CD4-positive, alpha-beta T cell (primary cell): ENCODE measurements at regions of chr10 and their contacts with region 1.

Region 1: GRCh38 chr10:69408318-69409175 is 8.2 kb downstream of the TACR2 start:
- DNase-seq: peak; percentile 79 to 97 (median 87)
- ATAC-seq: peak; percentile 92
- H3K4me3 ChIP-seq: peak overlapping the region; percentile 32
- H3K4me3 Mint-ChIP-seq: peak overlapping the region; percentile 64
- H3K27ac ChIP-seq: peak overlapping the region; percentile 72 to 82
- H3K27ac Mint-ChIP-seq: peak overlapping the region; percentile 88
- H3K4me1 ChIP-seq: peaks cover 26% of the 10 kb centered on the region
- H3K4me1 Mint-ChIP-seq: peaks cover 28% of the 10 kb centered on the region
- H3K27me3 ChIP-seq: no peaks in the 10 kb centered on the region
- H3K27me3 Mint-ChIP-seq: no peaks in the 10 kb centered on the region
- CTCF ChIP-seq: peak; percentile 73

Region 2: GRCh38 chr10:69318106-69318866 is 90.3 kb before region 1 on chr10:
- CTCF ChIA-PET with region 1: interaction called, 5 read pairs
- POLR2A ChIA-PET with region 1: interaction called, 5 read pairs
- intact Hi-C with region 1: loop called in 1 of 2 experiments (anchors 5 kb)
- DNase-seq: peak; percentile 83 to 96 (median 90)
- ATAC-seq: peak; percentile 90
- H3K4me3 ChIP-seq: peak overlapping the region; percentile 80
- H3K4me3 Mint-ChIP-seq: peak overlapping the region; percentile 98
- H3K27ac ChIP-seq: peak overlapping the region; percentile 86 to 93
- H3K27ac Mint-ChIP-seq: peak overlapping the region; percentile 95
- H3K4me1 ChIP-seq: peaks cover 45% of the 10 kb centered on the region
- H3K4me1 Mint-ChIP-seq: peaks cover 42% of the 10 kb centered on the region
- H3K27me3 ChIP-seq: no peaks in the 10 kb centered on the region
- H3K27me3 Mint-ChIP-seq: no peaks in the 10 kb centered on the region
- CTCF ChIP-seq: no peak

Region 3: GRCh38 chr10:69425511-69426298 is 17.2 kb after region 1 on chr10:
- CTCF ChIA-PET with region 1: interaction called, 7 read pairs
- POLR2A ChIA-PET with region 1: interaction called, 15 read pairs
- intact Hi-C with region 1: loop called (anchors 2 kb)
- DNase-seq: peak in 12 of 14 experiments; percentile 16 to 89 (median 40)
- ATAC-seq: peak; percentile 92
- H3K4me3 ChIP-seq: no peak overlapping the region
- H3K4me3 Mint-ChIP-seq: peak overlapping the region; percentile 16
- H3K27ac ChIP-seq: peak overlapping the region; percentile 74 to 88
- H3K27ac Mint-ChIP-seq: peak overlapping the region; percentile 82
- H3K4me1 ChIP-seq: peaks cover 67% of the 10 kb centered on the region
- H3K4me1 Mint-ChIP-seq: peaks cover 61% of the 10 kb centered on the region
- H3K27me3 ChIP-seq: no peaks in the 10 kb centered on the region
- H3K27me3 Mint-ChIP-seq: no peaks in the 10 kb centered on the region
- CTCF ChIP-seq: no peak

Region 4: GRCh38 chr10:69506834-69507721 is 98.5 kb after region 1 on chr10:
- CTCF ChIA-PET with region 1: interaction called, 25 read pairs
- POLR2A ChIA-PET with region 1: interaction called, 21 read pairs
- intact Hi-C with region 1: loop called (anchors 1 kb)
- DNase-seq: peak in 3 of 14 experiments; percentile 53 to 71 (median 65)
- ATAC-seq: peak; percentile 20
- H3K4me3 ChIP-seq: peak overlapping the region; percentile 22
- H3K4me3 Mint-ChIP-seq: peak overlapping the region; percentile 46
- H3K27ac ChIP-seq: peak overlapping the region; percentile 19 to 59
- H3K27ac Mint-ChIP-seq: peak overlapping the region; percentile 85
- H3K4me1 ChIP-seq: peaks cover 18% of the 10 kb centered on the region
- H3K4me1 Mint-ChIP-seq: peaks cover 11% of the 10 kb centered on the region
- H3K27me3 ChIP-seq: no peaks in the 10 kb centered on the region
- H3K27me3 Mint-ChIP-seq: peaks cover 3% of the 10 kb centered on the region
- CTCF ChIP-seq: no peak

Region 5: GRCh38 chr10:69639291-69640195 is 231.0 kb after region 1 on chr10:
- CTCF ChIA-PET with region 1: interaction called, 3 read pairs
- POLR2A ChIA-PET with region 1: interaction called, 4 read pairs
- intact Hi-C with region 1: loop called in 1 of 2 experiments (anchors 5 kb)
- DNase-seq: peak; percentile 57 to 87 (median 66)
- ATAC-seq: peak; percentile 81
- H3K4me3 ChIP-seq: no peak overlapping the region
- H3K4me3 Mint-ChIP-seq: no peak overlapping the region
- H3K27ac ChIP-seq: no peak overlapping the region
- H3K27ac Mint-ChIP-seq: no peak overlapping the region
- H3K4me1 ChIP-seq: no peaks in the 10 kb centered on the region
- H3K4me1 Mint-ChIP-seq: no peaks in the 10 kb centered on the region
- H3K27me3 ChIP-seq: no peaks in the 10 kb centered on the region
- H3K27me3 Mint-ChIP-seq: no peaks in the 10 kb centered on the region
- CTCF ChIP-seq: peak; percentile 88